Activated CD4-positive, alpha-beta T cell treated with anti-CD3 and anti-CD28 coated beads for 36 hours (primary cell): ENCODE measurements at regions of chr9 and their contacts with region 1.

Region 1: GRCh38 chr9:128159784-128160602 is at the start of gene BBLN:
- DNase-seq: peak; percentile 98
- ATAC-seq: peak; percentile 91
- H3K4me3 Mint-ChIP-seq: peak within 1 kb of the TSS; percentile 74
- H3K27ac Mint-ChIP-seq: peak within 1 kb of the TSS; percentile 90
- H3K4me1 Mint-ChIP-seq: peaks cover 19% of the 10 kb centered on the region
- H3K27me3 Mint-ChIP-seq: no peaks in the 10 kb centered on the region
- total RNA-seq, gene BBLN: 64.4 to 68.5 TPM

Region 2: GRCh38 chr9:127734747-127735529 is 425.1 kb before region 1 on chr9 and contains the start of gene TOR2A:
- CTCF ChIA-PET with region 1: no interaction called
- POLR2A ChIA-PET with region 1: no interaction called
- intact Hi-C with region 1: loop called in 1 of 2 experiments (anchors 1 kb)
- DNase-seq: peak; percentile 99
- ATAC-seq: peak; percentile 93
- H3K4me3 Mint-ChIP-seq: peak within 1 kb of the TSS; percentile 72
- H3K27ac Mint-ChIP-seq: peak within 1 kb of the TSS; percentile 73
- H3K4me1 Mint-ChIP-seq: peaks cover 12% of the 10 kb centered on the region
- H3K27me3 Mint-ChIP-seq: no peaks in the 10 kb centered on the region
- total RNA-seq, gene TOR2A: 11.3 to 14.0 TPM

Region 3: GRCh38 chr9:127937388-127938280 is 222.4 kb before region 1 on chr9 and contains the start of gene DPM2:
- CTCF ChIA-PET with region 1: no interaction called
- POLR2A ChIA-PET with region 1: no interaction called
- intact Hi-C with region 1: loop called in 1 of 2 experiments (anchors 1 kb)
- DNase-seq: peak; percentile 93
- ATAC-seq: peak; percentile 92
- H3K4me3 Mint-ChIP-seq: peak within 1 kb of the TSS; percentile 94
- H3K27ac Mint-ChIP-seq: peak within 1 kb of the TSS; percentile 93
- H3K4me1 Mint-ChIP-seq: peaks cover 34% of the 10 kb centered on the region
- H3K27me3 Mint-ChIP-seq: no peaks in the 10 kb centered on the region
- total RNA-seq, gene DPM2: 44.1 to 46.6 TPM

Region 4: DNA sequence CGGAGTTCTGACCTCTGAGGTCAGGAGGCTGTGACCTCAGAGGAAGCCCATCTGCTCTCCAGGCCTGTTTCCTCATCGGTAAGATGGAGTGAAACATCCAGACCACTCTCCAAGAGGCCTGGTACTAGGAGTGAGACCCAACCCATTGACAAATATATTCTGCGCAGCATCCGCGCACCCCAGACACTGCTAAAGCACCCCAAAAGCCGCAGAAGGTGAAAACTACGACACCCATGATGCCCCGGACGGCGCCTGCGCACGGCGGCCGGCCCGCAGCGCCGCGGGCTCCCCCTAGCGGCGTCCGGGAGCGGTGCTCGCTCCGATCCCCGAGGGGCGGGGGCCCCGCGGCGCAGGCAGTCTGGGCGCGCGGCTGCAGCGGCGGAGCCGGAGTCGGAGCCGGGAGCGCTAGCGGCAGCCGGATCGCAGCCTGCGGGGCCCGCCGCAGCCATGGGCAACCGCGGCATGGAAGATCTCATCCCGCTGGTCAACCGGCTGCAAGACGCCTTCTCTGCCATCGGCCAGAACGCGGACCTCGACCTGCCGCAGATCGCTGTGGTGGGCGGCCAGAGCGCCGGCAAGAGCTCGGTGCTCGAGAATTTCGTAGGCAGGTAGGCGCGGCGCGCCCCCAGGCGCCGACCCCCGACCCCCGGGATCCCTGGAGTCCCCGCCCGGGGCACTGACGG is 43.2 kb after region 1 on chr9 and contains the start of gene DNM1:
- CTCF ChIA-PET with region 1: interaction called, 3 read pairs
- POLR2A ChIA-PET with region 1: no interaction called
- intact Hi-C with region 1: loop called in 1 of 2 experiments (anchors 1 kb)
- DNase-seq: peak; percentile 83
- ATAC-seq: peak; percentile 95
- H3K4me3 Mint-ChIP-seq: peak within 1 kb of the TSS; percentile 39
- H3K27ac Mint-ChIP-seq: peak within 1 kb of the TSS; percentile 66
- H3K4me1 Mint-ChIP-seq: peaks cover 12% of the 10 kb centered on the region
- H3K27me3 Mint-ChIP-seq: peaks cover 11% of the 10 kb centered on the region
- total RNA-seq, gene DNM1: 0.50 to 0.72 TPM

Region 5: GRCh38 chr9:128275996-128276573 is 116.1 kb after region 1 on chr9 and contains the starts of genes GOLGA2 and SWI5:
- CTCF ChIA-PET with region 1: no interaction called
- POLR2A ChIA-PET with region 1: no interaction called
- intact Hi-C with region 1: loop called in 1 of 2 experiments (anchors 1 kb)
- DNase-seq: peak; percentile 100
- ATAC-seq: peak; percentile 99
- H3K4me3 Mint-ChIP-seq: peak within 1 kb of the TSS; percentile 97
- H3K27ac Mint-ChIP-seq: peak within 1 kb of the TSS; percentile 95
- H3K4me1 Mint-ChIP-seq: peaks cover 31% of the 10 kb centered on the region
- H3K27me3 Mint-ChIP-seq: no peaks in the 10 kb centered on the region
- total RNA-seq, gene GOLGA2: 28.4 to 29.4 TPM
- total RNA-seq, gene SWI5: 13.1 to 14.1 TPM

Region 6: DNA sequence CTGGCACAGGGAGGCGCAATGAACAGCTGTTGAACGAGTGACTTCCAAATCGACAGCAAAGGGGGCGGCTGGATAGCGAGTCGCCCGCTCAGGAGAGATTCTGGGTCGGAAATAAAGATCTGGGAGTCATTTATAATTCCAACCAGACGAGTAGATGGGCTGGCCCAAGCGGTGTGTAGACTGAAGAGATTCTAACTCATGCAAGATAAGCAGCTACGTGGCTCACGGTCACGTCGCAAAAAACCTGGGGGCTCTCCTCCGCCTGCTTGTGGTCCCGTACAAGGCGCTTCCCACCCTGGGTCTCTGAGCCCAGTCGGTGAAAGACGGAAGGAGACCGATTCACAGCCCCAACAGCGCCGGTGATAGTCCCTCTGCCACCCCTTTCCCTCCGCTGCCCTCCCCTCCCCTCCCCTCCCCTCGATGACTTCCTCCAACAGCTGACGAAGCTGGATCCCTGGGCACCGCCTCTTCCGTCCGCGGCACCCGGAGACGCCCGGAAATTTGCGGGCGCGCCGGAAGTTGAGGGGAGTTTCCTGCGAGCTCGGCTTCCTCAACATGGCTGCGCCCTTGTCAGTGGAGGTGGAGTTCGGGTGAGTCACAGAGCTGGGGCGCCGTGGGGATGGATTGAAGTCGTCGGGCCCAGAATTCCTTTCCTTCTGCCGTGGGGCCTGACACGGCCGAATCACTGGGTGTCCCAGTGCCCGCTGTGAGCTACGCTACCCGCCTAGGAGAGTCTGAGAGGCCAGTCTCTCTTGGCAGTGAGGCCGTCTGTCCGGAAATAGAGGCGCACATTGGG is 211.0 kb after region 1 on chr9 and contains the start of gene URM1:
- CTCF ChIA-PET with region 1: no interaction called
- POLR2A ChIA-PET with region 1: no interaction called
- intact Hi-C with region 1: loop called in 1 of 2 experiments (anchors 1 kb)
- DNase-seq: peak; percentile 98
- ATAC-seq: peak; percentile 98
- H3K4me3 Mint-ChIP-seq: peak within 1 kb of the TSS; percentile 87
- H3K27ac Mint-ChIP-seq: peak within 1 kb of the TSS; percentile 89
- H3K4me1 Mint-ChIP-seq: peaks cover 27% of the 10 kb centered on the region
- H3K27me3 Mint-ChIP-seq: no peaks in the 10 kb centered on the region
- total RNA-seq, gene URM1: 39.9 to 56.1 TPM

Region 7: DNA sequence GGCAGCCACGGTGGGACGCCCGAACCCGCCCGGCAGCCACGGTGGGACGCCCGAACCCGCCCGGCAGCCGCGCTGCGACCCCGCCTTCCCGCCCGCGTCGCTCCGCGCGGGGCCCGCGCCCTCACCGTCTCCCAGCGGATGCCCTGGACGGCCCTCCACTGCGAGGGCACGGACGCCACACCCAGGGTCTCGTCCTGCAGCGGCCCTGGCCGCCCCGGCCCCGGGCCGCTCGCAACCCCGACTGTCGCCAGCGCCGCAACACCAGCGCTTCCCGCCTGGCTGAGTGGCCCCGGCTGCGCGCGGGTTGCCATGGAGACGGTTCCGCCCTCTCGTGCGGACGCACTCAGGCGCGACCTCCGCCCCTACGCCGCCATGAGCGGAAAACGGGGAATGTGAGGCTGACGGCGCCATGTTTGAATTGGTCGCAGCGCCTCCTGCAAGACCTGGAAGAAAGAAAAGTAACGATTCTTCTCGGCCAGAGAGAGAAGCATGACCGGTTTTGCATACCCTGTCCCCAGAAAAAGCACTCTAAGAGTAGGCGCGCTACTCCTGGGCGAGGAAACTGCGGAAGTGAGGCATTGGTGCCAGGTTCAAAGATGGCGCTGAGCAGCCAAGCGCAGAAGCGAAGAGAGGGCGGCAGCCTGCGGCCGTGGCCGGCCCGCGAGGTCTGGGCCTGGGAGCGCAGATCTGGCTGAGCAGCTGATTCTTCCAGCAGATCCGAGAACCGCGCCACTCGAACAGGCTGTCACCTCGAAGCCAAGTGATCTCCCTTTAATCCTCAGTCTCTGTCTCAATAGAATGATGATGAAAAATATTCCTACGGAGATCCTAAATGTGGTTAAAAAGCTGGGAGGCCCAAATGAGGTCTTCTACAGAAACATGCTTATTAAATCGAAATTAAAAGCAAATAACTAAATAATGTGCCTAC is 496.7 kb after region 1 on chr9 and contains the start of gene DYNC2I2:
- CTCF ChIA-PET with region 1: no interaction called
- POLR2A ChIA-PET with region 1: no interaction called
- intact Hi-C with region 1: no loop called
- DNase-seq: peak; percentile 99
- ATAC-seq: peak; percentile 98
- H3K4me3 Mint-ChIP-seq: peak within 1 kb of the TSS; percentile 82
- H3K27ac Mint-ChIP-seq: peak within 1 kb of the TSS; percentile 100
- H3K4me1 Mint-ChIP-seq: peaks cover 6% of the 10 kb centered on the region
- H3K27me3 Mint-ChIP-seq: no peaks in the 10 kb centered on the region
- total RNA-seq, gene DYNC2I2: 26.7 to 35.7 TPM

Region 8: DNA sequence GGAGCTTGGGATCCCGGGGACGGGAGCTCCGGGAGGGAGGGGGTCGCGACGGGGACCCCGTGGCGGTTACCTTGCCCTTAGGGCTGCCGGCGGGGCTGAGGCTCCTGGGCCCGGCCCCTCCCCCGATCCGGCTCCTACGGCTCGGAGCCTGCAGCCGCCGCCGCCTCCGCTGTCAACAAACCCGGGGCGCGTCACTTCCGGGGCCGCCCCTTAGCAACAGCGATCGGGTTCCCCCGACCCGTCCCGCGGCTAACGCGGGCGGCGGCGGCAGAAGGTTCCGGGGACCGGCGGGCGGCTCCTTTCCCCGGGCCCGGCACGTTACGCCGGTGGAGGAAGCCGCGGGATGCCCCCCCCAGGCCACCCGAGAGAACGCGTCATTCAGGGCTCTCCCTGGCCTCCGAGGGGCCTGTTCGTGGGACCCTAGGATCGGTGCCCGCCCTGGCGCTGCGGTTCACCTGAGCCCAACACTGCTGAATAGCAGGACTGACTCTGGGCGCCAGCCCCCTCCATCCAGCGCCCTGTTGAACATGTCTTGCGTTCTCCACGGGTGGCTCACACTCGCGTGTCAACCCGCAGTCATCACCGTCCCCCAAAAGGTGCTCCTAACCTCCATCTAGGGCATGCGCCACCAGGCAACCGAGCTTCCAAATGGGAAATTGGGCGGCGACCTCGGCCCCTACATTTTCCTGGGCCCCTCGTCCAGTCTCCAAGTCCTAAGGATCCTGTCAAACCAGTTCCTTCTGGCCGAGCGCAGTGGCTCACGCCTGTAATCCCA is 611.9 kb after region 1 on chr9 and contains the start of gene ZER1:
- CTCF ChIA-PET with region 1: no interaction called
- POLR2A ChIA-PET with region 1: no interaction called
- intact Hi-C with region 1: loop called in 1 of 2 experiments (anchors 2 kb)
- DNase-seq: peak; percentile 97
- ATAC-seq: peak; percentile 94
- H3K4me3 Mint-ChIP-seq: peak within 1 kb of the TSS; percentile 82
- H3K27ac Mint-ChIP-seq: peak within 1 kb of the TSS; percentile 86
- H3K4me1 Mint-ChIP-seq: peaks cover 18% of the 10 kb centered on the region
- H3K27me3 Mint-ChIP-seq: no peaks in the 10 kb centered on the region
- total RNA-seq, gene ZER1: 17.1 to 19.3 TPM